Panc1 (cell line): ENCODE measurements at regions of chr6 and their contacts with region 1.

Region 1: DNA sequence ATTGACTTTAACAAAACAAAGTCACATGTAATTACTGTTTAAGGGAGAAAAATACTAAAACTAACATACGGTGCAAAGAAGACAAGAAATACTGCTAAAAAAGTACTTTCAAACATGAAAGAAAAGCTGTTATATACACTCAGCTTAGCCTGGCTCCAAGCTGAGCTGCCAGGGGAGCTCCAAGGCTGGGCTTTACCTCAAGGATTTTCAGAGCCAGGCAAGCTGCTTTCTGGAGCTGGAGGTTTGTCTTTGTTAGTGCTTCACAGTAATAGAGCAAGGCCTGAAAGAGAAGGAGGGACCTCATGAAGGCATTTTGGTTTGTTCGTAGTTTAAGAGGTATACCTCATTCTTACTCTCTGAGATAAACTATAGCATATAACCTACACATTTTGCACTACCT is 19.6 kb upstream of the ARMH2 start:
- DNase-seq: no peak
- ATAC-seq: no peak
- H3K4me3 ChIP-seq: no peak overlapping the region
- H3K27ac ChIP-seq: no peak overlapping the region
- H3K4me1 ChIP-seq: no peaks in the 10 kb centered on the region
- H3K27me3 ChIP-seq: no peaks in the 10 kb centered on the region
- CTCF ChIP-seq: no peak

Region 2: DNA sequence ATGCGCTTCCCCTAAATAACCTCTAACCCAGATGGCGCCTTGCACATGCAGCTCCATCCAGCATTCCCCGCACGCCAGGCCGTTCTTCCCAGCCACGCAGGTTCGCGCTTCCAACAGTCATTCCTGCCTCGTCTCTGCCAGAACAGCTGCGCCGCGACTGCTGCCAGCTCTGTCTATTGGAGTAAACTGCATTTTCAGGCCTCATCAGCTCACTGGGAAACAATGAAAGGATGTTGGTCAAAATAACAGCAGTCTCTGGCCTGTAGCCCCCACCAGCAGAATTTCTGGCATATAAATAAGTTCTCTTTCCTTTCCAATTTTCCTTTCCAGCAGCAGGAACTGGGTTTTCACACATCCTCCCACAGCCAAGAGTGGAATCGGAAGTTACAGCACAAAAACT is 677.8 kb before region 1 on chr6:
- CTCF ChIA-PET with region 1: no interaction called
- POLR2A ChIA-PET with region 1: interaction called, 12 read pairs
- in situ Hi-C with region 1: no loop called
- intact Hi-C with region 1: no loop called
- DNase-seq: no peak
- ATAC-seq: no peak
- H3K4me3 ChIP-seq: no peak overlapping the region
- H3K27ac ChIP-seq: no peak overlapping the region
- H3K4me1 ChIP-seq: no peaks in the 10 kb centered on the region
- H3K27me3 ChIP-seq: no peaks in the 10 kb centered on the region
- CTCF ChIP-seq: no peak